ENCODE measurements at regions of chr1 and their contacts with region 1.

Region 1: GRCh38 chr1:941588-942383 is 17.3 kb downstream of the NOC2L start:
- DNase-seq: peak; percentile 85

Region 2: DNA sequence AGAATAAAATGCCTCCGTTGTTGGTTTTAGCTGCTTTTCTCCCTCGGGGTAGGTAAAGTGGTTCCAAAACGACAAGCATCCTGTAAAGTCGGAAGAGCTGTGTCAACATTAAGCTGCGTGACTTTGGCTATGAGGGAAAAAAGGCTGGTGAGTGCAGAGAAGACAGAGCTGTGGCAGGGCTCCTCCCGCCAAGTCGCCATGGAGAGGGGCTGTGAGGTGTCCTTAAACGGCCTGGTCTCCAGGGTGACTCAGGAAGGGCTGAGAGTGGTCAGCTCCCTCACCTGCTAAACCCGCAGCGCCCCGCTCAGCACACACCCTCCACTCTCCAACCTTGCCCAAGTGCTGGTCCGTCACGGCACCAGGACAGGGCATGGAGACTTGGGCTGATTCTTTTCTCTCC is 109.7 kb before region 1 on chr1:
- CTCF ChIA-PET with region 1: no interaction called
- POLR2A ChIA-PET with region 1: no interaction called
- DNase-seq: no peak

Region 3: GRCh38 chr1:904310-904950 is 37.4 kb before region 1 on chr1:
- CTCF ChIA-PET with region 1: interaction called, 10 read pairs
- POLR2A ChIA-PET with region 1: interaction called, 28 read pairs
- DNase-seq: peak; percentile 86

Region 4: DNA sequence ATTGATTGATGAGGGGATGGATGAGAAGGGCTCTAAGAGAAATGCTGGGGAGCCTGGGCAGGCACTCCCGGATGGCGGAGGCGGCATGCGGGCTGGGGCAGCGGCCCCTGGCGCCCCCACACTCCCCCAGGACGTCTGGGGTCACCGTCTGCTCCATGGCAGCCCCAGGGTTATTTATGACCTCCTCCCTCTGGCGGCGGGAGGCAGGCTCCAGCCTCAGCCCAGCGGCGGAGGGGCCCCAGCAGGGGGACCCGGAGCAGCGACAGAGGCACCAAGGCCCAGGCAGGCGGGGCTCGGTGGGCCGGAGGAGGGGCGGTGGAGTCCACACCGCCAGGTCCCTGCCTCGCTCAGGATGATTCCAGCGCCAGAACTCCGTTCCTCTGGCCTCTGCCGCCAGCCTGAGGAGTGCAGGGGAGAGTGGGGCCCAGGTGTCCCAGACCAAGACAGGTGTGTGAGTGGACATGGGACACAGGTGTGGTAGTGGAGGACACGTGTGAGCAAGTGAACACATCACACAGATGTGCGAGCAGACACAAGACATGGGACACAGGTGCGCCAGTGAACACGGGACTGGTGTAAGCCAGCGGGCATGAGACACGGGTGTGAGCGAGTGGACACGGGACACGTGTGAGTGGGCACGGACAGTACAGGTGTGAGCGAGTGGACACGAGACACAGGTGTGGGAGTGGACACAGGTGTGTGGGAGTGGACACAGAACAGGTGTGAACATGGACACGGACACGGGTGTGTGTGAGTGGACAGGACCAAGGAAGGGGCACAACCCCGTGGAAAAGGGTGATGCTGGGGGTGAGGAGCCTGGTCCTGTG is 20.6 kb before region 1 on chr1:
- CTCF ChIA-PET with region 1: interaction called, 5 read pairs
- POLR2A ChIA-PET with region 1: interaction called, 61 read pairs
- DNase-seq: peak; percentile 79

Region 5: DNA sequence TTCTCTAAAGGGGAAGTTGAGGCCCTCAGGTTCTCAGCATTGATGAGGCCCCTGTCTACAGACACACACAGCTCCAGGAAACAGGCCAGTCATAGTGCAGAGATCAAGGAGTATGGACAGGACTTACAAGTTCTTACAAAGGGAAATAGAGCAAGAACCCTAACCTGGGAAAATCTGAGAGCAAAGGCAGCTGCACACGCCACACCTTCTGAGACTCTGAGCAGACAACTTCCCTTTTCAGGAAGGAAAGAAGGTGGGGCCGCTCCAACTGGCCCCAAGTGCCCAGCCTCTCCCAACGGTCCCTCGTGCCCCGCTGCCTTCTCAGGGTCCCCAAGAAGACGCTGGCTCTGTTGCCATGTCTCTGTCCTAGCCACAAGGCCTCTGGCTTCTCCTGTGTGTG is 13.7 kb after region 1 on chr1:
- CTCF ChIA-PET with region 1: interaction called, 7 read pairs
- POLR2A ChIA-PET with region 1: interaction called, 10 read pairs
- DNase-seq: no peak